Activated CD4-positive, alpha-beta T cell treated with anti-CD3 and anti-CD28 coated beads, Interleukin-2, amount 10 ng/mL, durations not matched to agents 24 days and 14 days (primary cell): ENCODE measurements at regions of chr3 and their contacts with region 1.

Region 1: GRCh38 chr3:152471814-152472671 is 203.3 kb downstream of the MBNL1 start:
- DNase-seq: peak; percentile 89
- H3K4me3 Mint-ChIP-seq: peak overlapping the region; percentile 36
- H3K27ac Mint-ChIP-seq: no peak overlapping the region
- H3K4me1 Mint-ChIP-seq: peaks cover 6% of the 10 kb centered on the region
- H3K27me3 Mint-ChIP-seq: peaks cover 9% of the 10 kb centered on the region

Region 2: GRCh38 chr3:152071924-152072323 is 400.1 kb before region 1 on chr3:
- intact Hi-C with region 1: loop called (anchors 1 kb)
- DNase-seq: peak; percentile 71
- H3K4me3 Mint-ChIP-seq: no peak overlapping the region
- H3K27ac Mint-ChIP-seq: no peak overlapping the region
- H3K4me1 Mint-ChIP-seq: peaks cover 3% of the 10 kb centered on the region
- H3K27me3 Mint-ChIP-seq: peaks cover 7% of the 10 kb centered on the region

Region 3: DNA sequence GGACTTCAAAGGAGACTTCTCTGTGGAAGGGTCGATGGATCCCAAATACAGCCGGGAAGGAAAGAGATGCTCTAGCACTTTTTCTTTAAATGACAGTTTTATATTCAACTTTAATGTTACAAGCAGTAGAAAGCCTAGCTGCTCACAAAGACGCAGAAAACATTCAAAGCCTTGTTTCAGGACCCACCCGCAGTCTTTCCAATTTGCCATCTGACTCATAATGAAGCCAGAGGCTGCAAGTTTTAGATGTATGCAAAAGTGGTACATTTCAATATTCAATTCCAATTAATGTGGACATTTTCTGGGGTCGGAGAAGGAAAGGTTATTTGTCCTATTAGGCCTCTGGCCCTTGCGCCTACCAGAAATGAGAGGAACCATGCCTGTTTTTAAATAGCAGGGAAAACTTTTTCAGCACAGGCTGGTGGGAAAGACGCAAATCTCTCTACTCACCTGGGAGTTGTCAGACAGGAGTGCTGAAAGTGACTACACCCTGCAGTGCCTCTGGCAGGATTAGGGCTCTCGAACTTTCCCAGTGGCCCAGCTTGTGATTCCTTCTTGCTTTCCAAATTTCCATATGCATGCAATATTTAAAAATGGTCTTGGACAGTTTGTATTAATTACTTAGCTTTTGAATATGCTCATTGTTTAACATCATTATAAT is 320.7 kb before region 1 on chr3:
- intact Hi-C with region 1: no loop called
- DNase-seq: no peak
- H3K4me3 Mint-ChIP-seq: no peak overlapping the region
- H3K27ac Mint-ChIP-seq: no peak overlapping the region
- H3K4me1 Mint-ChIP-seq: peaks cover 16% of the 10 kb centered on the region
- H3K27me3 Mint-ChIP-seq: peaks cover 8% of the 10 kb centered on the region

Region 4: GRCh38 chr3:152183473-152183872 is 288.6 kb before region 1 on chr3:
- intact Hi-C with region 1: loop called (anchors 5 kb)
- DNase-seq: peak; percentile 81
- H3K4me3 Mint-ChIP-seq: no peak overlapping the region
- H3K27ac Mint-ChIP-seq: no peak overlapping the region
- H3K4me1 Mint-ChIP-seq: peaks cover 38% of the 10 kb centered on the region
- H3K27me3 Mint-ChIP-seq: no peaks in the 10 kb centered on the region

Region 5: GRCh38 chr3:152508705-152509104 is 36.7 kb after region 1 on chr3:
- intact Hi-C with region 1: loop called (anchors 5 kb)
- DNase-seq: no peak
- H3K4me3 Mint-ChIP-seq: no peak overlapping the region
- H3K27ac Mint-ChIP-seq: no peak overlapping the region
- H3K4me1 Mint-ChIP-seq: peaks cover 32% of the 10 kb centered on the region
- H3K27me3 Mint-ChIP-seq: peaks cover 10% of the 10 kb centered on the region

Region 6: DNA sequence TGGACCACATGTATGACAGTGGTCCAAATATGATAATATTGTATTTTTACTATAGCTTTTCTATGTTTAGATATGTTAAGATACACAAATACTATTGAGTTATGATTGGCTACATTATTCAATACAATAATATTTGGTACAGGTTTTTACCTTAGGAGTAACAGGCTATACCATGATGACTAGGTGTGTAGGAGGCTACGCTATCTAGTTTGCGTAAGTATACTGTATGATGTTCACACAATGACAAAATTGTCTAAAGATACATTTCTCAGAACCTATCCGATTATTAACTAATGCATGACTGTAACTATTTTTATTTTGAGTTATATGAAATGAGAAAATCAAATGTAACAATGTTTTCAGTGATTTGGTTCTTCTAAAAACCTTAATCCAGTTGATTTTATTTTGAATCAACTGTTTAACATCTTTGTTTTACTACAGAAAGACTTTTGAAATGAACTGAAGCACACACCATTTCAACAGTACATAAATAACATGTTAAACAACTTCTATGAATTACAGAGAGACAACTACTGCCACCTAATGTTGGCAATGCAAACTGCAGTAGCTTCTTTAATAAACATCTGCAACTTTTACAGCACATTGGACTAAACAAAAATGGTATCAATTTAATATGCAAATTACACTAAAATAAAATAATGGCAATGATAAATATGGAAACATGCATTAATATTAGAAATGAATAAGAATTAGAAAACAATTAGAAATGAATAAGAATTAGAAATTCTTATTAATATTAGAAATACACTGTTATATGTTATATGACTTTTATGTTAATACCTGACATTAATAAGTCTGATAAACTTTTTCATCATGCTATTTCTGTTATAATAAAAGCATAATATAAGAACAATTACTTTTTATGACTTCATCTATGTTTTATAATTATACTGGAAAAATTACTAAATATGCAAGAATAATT is 52.4 kb after region 1 on chr3:
- intact Hi-C with region 1: loop called (anchors 1 kb)
- DNase-seq: peak; percentile 85
- H3K4me3 Mint-ChIP-seq: no peak overlapping the region
- H3K27ac Mint-ChIP-seq: no peak overlapping the region
- H3K4me1 Mint-ChIP-seq: no peaks in the 10 kb centered on the region
- H3K27me3 Mint-ChIP-seq: peaks cover 1% of the 10 kb centered on the region

Region 7: DNA sequence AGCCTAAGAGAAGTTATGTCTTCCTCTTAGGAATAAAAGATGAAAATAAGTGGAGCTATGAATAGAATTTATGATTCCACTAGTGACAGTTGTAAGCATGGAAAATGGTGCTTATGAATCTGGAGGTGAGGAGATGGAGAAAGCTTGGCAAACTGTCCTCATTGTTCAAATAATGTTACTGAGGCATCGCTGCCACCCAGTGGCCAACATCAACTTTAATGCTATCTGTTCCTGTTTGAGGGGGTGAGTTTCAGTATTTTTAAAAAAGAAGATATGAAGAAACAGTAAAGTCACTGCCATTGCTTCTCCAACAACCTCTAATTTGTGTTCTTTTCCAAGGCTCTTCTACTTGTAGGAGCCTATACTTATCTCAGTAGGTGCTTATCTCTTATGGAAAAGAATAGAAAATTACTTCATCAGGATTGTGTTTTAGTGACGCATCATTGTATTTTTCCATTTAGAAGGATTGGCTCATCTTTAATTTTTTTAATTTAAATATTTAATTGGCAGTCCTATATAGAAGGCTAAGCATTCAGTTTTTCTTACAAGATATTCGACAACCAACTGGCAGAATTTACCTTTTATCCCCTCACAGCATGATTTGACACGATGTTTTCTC is 102.5 kb after region 1 on chr3:
- intact Hi-C with region 1: loop called (anchors 1 kb)
- DNase-seq: peak; percentile 68
- H3K4me3 Mint-ChIP-seq: no peak overlapping the region
- H3K27ac Mint-ChIP-seq: no peak overlapping the region
- H3K4me1 Mint-ChIP-seq: no peaks in the 10 kb centered on the region
- H3K27me3 Mint-ChIP-seq: peaks cover 36% of the 10 kb centered on the region